Activated CD8-positive, alpha-beta T cell treated with anti-CD3 and anti-CD28 coated beads for 36 hours (primary cell): ENCODE measurements at regions of chr4 and their contacts with region 1.

Region 1: GRCh38 chr4:184474263-184475095 is at the start of gene IRF2:
- DNase-seq: peak; percentile 98
- ATAC-seq: peak; percentile 83
- H3K4me3 Mint-ChIP-seq: peak within 1 kb of the TSS; percentile 94
- H3K27ac Mint-ChIP-seq: peak within 1 kb of the TSS; percentile 98
- H3K4me1 Mint-ChIP-seq: peaks cover 50% of the 10 kb centered on the region
- H3K27me3 Mint-ChIP-seq: no peaks in the 10 kb centered on the region
- CTCF ChIP-seq: no peak
- total RNA-seq, gene IRF2: 48.1 to 56.4 TPM

Region 2: DNA sequence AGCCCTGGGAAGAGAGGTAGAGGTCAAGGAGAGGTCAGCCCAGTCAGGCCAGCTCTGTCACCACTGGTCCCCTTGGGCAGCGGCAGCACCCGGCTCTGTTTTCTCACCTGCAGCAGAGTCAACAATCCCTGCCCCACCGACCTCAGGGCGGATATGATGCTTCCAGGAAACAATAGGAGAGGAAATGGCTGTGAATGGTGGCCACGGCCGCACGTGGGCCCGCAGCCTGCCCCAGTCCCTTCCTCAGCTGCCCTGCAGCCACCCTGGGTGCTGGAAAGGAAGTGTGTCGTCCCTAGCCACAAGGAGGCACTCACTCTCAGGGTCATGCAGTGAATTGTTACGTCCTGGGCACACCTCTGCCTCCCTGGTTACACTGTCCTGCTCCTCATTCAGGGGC is 164.3 kb before region 1 on chr4:
- CTCF ChIA-PET with region 1: no interaction called
- POLR2A ChIA-PET with region 1: no interaction called
- intact Hi-C with region 1: loop called (anchors 5 kb)
- DNase-seq: peak; percentile 72
- ATAC-seq: peak; percentile 51
- H3K4me3 Mint-ChIP-seq: peak overlapping the region; percentile 18
- H3K27ac Mint-ChIP-seq: peak overlapping the region; percentile 88
- H3K4me1 Mint-ChIP-seq: peaks cover 68% of the 10 kb centered on the region
- H3K27me3 Mint-ChIP-seq: no peaks in the 10 kb centered on the region
- CTCF ChIP-seq: peak; percentile 60

Region 3: GRCh38 chr4:184384056-184384809 is 90.2 kb before region 1 on chr4:
- CTCF ChIA-PET with region 1: no interaction called
- POLR2A ChIA-PET with region 1: no interaction called
- intact Hi-C with region 1: no loop called
- DNase-seq: peak; percentile 48
- ATAC-seq: peak; percentile 52
- H3K4me3 Mint-ChIP-seq: peak overlapping the region; percentile 22
- H3K27ac Mint-ChIP-seq: peak overlapping the region; percentile 63
- H3K4me1 Mint-ChIP-seq: peaks cover 57% of the 10 kb centered on the region
- H3K27me3 Mint-ChIP-seq: no peaks in the 10 kb centered on the region
- CTCF ChIP-seq: no peak

Region 4: DNA sequence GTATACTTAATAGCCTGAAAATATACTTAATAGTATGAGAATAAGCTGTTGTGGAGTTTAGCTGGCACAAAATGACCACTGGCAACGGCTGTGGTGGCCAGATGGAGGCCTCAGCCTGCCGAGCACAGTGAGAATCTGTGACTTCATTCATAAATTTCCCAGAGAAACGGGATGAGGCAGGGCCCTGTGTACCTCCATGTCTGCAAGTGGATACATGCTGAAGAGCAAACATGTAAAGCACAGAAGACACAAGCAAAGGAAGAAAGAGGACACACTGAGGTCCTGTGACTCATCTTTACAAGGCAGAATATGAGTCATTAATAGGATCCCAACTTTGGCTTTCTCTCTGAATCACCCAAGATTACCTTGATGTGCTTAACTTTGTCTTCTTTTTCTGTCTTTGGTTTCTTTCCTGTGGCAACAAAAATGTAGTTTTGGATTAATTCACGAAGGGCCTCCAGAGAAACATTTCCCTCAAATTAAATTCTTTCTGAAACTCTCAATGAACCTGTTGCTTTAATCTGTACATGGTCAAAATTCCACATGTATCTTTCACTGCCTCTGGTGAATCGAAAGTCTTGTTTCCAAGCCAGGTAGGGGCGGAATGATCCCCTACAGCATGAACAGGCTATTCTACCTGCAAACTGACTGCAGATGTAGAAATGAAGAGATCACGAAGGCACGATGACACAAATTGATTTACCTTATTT is 56.5 kb before region 1 on chr4:
- CTCF ChIA-PET with region 1: interaction called, 4 read pairs
- POLR2A ChIA-PET with region 1: interaction called, 11 read pairs
- intact Hi-C with region 1: no loop called
- DNase-seq: peak; percentile 22
- ATAC-seq: peak; percentile 76
- H3K4me3 Mint-ChIP-seq: peak overlapping the region; percentile 70
- H3K27ac Mint-ChIP-seq: peak overlapping the region; percentile 93
- H3K4me1 Mint-ChIP-seq: peaks cover 81% of the 10 kb centered on the region
- H3K27me3 Mint-ChIP-seq: no peaks in the 10 kb centered on the region
- CTCF ChIP-seq: no peak

Region 5: DNA sequence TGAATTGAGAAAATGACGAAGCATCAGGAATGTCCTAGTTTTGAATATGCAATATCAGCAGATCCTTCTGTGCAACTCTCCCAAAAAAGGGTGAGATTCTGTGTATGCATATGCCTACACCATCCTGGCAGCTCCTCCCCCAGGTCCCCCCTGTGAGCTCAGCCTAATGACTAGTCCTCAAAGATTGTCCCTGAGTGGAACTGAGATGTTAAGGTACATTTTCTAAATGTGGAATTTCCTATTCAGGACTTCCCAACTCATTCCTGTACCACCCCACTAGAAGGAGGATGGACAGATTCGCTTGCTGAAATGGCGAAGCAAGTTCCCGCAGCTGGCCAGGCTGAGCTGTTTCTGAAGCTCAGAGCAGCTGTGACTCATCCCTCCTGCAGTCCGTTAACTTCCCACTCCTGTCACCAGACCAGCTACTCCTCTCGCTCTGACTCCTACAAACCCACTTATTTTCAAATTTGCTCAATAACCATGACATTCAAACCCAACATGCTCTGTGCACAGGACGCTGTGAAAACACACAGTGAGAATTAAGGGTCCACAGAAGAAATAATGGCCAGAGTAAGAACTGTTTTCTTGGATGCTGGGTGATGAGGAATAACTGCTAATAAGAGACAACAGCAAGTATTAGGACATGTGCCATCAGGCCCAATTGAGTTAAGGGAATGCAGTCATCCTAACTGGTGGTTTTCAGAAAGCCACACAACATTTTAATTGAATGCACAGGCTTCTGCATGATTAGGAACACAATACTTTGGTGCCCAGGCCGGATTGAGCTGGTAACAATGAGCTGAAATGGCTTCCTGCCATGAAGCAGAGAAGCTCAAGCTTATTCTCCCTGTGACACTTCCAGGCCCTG is 39.9 kb after region 1 on chr4:
- CTCF ChIA-PET with region 1: interaction called, 5 read pairs
- POLR2A ChIA-PET with region 1: interaction called, 18 read pairs
- intact Hi-C with region 1: loop called (anchors 5 kb)
- DNase-seq: peak; percentile 88
- ATAC-seq: peak; percentile 93
- H3K4me3 Mint-ChIP-seq: peak overlapping the region; percentile 61
- H3K27ac Mint-ChIP-seq: peak overlapping the region; percentile 81
- H3K4me1 Mint-ChIP-seq: peaks cover 37% of the 10 kb centered on the region
- H3K27me3 Mint-ChIP-seq: no peaks in the 10 kb centered on the region
- CTCF ChIP-seq: no peak

Region 6: GRCh38 chr4:184649026-184649970 is 174.8 kb after region 1 on chr4 and contains the starts of genes CASP3 and PRIMPOL:
- CTCF ChIA-PET with region 1: interaction called, 4 read pairs
- POLR2A ChIA-PET with region 1: interaction called, 7 read pairs
- intact Hi-C with region 1: loop called (anchors 5 kb)
- DNase-seq: peak; percentile 95
- ATAC-seq: peak; percentile 83
- H3K4me3 Mint-ChIP-seq: peak within 1 kb of the TSS; percentile 94
- H3K27ac Mint-ChIP-seq: peak within 1 kb of the TSS; percentile 92
- H3K4me1 Mint-ChIP-seq: peaks cover 46% of the 10 kb centered on the region
- H3K27me3 Mint-ChIP-seq: no peaks in the 10 kb centered on the region
- CTCF ChIP-seq: no peak
- total RNA-seq, gene CASP3: 96.9 to 100 TPM
- total RNA-seq, gene PRIMPOL: 16.9 to 17.3 TPM